H1 (cell line): ENCODE measurements at regions of chr15 and their contacts with region 1.

Region 1: GRCh38 chr15:50315814-50316630 is 39.0 kb downstream of the GABPB1 start:
- DNase-seq: no peak
- H3K4me3 ChIP-seq: no peak overlapping the region
- H3K27ac ChIP-seq: no peak overlapping the region
- H3K4me1 ChIP-seq: no peaks in the 10 kb centered on the region
- H3K27me3 ChIP-seq: no peaks in the 10 kb centered on the region
- CTCF ChIP-seq: peak in 1 of 3 experiments; percentile 48; a peak in 2 of 4 replicates
- EP300 ChIP-seq: no peak
- POLR2A ChIP-seq: no peak
- RAD21 ChIP-seq: peak in 1 of 2 experiments; percentile 60; a peak in 3 of 4 replicates

Region 2: GRCh38 chr15:50145451-50145872 is 170.6 kb before region 1 on chr15:
- CTCF ChIA-PET with region 1: interaction called, 10 read pairs
- POLR2A ChIA-PET with region 1: no interaction called
- DNase-seq: peak in 1 of 2 experiments; percentile 7
- H3K4me3 ChIP-seq: no peak overlapping the region
- H3K27ac ChIP-seq: no peak overlapping the region
- H3K4me1 ChIP-seq: no peaks in the 10 kb centered on the region
- H3K27me3 ChIP-seq: no peaks in the 10 kb centered on the region
- CTCF ChIP-seq: peak in 2 of 3 experiments; percentile 39 to 46; a peak in 3 of 4 replicates
- EP300 ChIP-seq: no peak
- POLR2A ChIP-seq: no peak
- RAD21 ChIP-seq: peak; percentile 79 to 82

Region 3: DNA sequence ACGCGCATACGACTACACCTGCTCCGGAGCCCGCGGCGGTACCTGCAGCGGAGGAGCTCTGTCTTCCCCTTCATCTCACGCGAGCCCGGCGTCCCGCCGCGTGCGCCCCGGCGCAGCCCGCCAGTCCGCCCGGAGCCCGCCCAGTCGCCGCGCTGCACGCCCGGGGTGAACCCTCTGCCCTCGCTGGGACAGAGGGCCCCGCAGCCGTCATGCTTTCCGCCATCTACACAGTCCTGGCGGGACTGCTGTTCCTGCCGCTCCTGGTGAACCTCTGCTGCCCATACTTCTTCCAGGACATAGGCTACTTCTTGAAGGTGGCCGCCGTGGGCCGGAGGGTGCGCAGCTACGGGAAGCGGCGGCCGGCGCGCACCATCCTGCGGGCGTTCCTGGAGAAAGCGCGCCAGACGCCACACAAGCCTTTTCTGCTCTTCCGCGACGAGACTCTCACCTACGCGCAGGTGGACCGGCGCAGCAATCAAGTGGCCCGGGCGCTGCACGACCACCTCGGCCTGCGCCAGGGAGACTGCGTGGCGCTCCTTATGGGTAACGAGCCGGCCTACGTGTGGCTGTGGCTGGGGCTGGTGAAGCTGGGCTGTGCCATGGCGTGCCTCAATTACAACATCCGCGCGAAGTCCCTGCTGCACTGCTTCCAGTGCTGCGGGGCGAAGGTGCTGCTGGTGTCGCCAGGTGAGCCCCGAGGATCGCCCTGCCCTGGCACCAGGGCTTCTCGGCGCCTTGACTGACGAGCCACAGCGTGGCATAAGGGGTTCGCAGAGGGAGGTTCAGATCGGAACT is 133.6 kb before region 1 on chr15:
- CTCF ChIA-PET with region 1: interaction called, 15 read pairs
- POLR2A ChIA-PET with region 1: no interaction called
- DNase-seq: peak in 1 of 2 experiments; percentile 85
- H3K4me3 ChIP-seq: peak overlapping the region; percentile 51 to 66 (median 58)
- H3K27ac ChIP-seq: no peak overlapping the region
- H3K4me1 ChIP-seq: peaks cover 0 to 8% (median 4%) of the 10 kb centered on the region in 4 experiments; a peak in 6 of 7 replicates
- H3K27me3 ChIP-seq: peaks cover 3 to 33% (median 28%) of the 10 kb centered on the region in 4 experiments
- CTCF ChIP-seq: no peak
- EP300 ChIP-seq: no peak
- POLR2A ChIP-seq: no peak
- RAD21 ChIP-seq: no peak

Region 4: DNA sequence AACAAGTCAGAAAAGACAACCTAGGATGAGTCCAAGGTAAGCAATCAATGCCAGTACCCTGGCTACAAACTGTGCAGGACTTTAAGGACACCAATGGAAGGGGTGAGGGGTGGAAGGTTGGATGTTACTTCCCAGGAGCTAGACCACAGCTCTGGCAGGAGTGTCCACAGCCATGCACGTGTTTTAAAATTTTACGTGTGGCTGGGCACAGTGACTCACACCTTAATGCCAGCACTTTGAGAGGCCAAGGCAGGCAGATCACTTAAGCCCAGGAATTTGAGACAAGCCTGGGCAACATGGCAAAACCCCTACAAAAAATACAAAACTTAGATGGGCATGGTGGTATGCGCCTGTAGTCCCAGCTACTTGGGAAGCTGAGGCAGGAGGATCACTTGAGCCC is 35.8 kb before region 1 on chr15:
- CTCF ChIA-PET with region 1: interaction called, 10 read pairs
- POLR2A ChIA-PET with region 1: no interaction called
- DNase-seq: no peak
- H3K4me3 ChIP-seq: no peak overlapping the region
- H3K27ac ChIP-seq: no peak overlapping the region
- H3K4me1 ChIP-seq: no peaks in the 10 kb centered on the region
- H3K27me3 ChIP-seq: no peaks in the 10 kb centered on the region
- CTCF ChIP-seq: no peak
- EP300 ChIP-seq: no peak
- POLR2A ChIP-seq: no peak
- RAD21 ChIP-seq: no peak

Region 5: DNA sequence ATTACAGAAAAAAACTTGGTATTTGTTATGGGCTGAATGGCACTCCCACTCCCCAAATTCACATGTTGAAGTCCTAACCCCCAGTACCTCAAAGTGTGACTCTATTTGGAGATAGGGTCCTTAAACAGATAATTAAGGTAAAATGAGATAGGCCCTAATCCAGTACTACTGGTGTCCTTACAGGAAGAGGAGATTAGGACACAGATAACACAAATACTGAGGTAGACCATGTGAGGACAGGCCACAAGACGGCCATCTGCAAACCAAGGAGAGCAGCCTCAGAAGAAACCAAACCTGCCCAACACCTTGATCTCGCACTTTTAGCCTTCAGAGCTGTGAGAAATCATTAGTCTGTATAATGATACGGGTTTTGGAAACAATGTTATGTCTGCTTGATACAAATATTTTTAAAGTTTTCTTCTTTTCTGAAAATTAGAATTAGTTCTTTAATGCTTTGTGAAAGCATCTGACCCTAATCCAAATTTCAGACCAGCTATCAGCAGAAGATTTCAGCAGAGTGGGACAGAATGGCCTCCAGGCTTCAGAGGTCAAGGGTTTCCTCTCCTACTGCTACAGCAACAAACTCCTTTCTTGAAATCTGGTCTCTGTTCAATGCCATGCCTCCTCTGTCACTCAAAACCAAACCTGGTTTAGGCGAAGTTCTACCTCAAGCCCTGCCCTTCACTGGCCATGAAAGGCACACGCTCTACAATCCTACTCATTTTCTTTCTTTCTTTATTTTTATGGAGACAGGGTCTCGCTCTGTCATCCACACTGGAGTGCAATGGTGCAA is 28.5 kb before region 1 on chr15:
- CTCF ChIA-PET with region 1: interaction called, 14 read pairs
- POLR2A ChIA-PET with region 1: no interaction called
- DNase-seq: no peak
- H3K4me3 ChIP-seq: no peak overlapping the region
- H3K27ac ChIP-seq: no peak overlapping the region
- H3K4me1 ChIP-seq: no peaks in the 10 kb centered on the region
- H3K27me3 ChIP-seq: no peaks in the 10 kb centered on the region
- CTCF ChIP-seq: no peak
- EP300 ChIP-seq: no peak
- POLR2A ChIP-seq: no peak
- RAD21 ChIP-seq: no peak

Region 6: GRCh38 chr15:50302581-50302980 is 13.4 kb before region 1 on chr15:
- CTCF ChIA-PET with region 1: interaction called, 12 read pairs
- POLR2A ChIA-PET with region 1: no interaction called
- DNase-seq: no peak
- H3K4me3 ChIP-seq: no peak overlapping the region
- H3K27ac ChIP-seq: no peak overlapping the region
- H3K4me1 ChIP-seq: no peaks in the 10 kb centered on the region
- H3K27me3 ChIP-seq: no peaks in the 10 kb centered on the region
- CTCF ChIP-seq: no peak
- EP300 ChIP-seq: no peak
- POLR2A ChIP-seq: no peak
- RAD21 ChIP-seq: no peak

Region 7: GRCh38 chr15:50330921-50331320 is 14.9 kb after region 1 on chr15:
- CTCF ChIA-PET with region 1: interaction called, 19 read pairs
- POLR2A ChIA-PET with region 1: interaction called, 3 read pairs
- DNase-seq: no peak
- H3K4me3 ChIP-seq: no peak overlapping the region; a peak in 1 of 8 replicates
- H3K27ac ChIP-seq: peak overlapping the region; percentile 45; the same call in 1 of the 2 replicates
- H3K4me1 ChIP-seq: peaks cover 0 to 5% (median 1%) of the 10 kb centered on the region in 4 experiments; a peak in 3 of 7 replicates
- H3K27me3 ChIP-seq: peaks cover 0 to 1% (median 0%) of the 10 kb centered on the region in 4 experiments; a peak in 1 of 7 replicates
- CTCF ChIP-seq: no peak
- EP300 ChIP-seq: no peak
- POLR2A ChIP-seq: no peak
- RAD21 ChIP-seq: no peak